ENCODE measurements at regions of chrX and their contacts with region 1.

Region 1: DNA sequence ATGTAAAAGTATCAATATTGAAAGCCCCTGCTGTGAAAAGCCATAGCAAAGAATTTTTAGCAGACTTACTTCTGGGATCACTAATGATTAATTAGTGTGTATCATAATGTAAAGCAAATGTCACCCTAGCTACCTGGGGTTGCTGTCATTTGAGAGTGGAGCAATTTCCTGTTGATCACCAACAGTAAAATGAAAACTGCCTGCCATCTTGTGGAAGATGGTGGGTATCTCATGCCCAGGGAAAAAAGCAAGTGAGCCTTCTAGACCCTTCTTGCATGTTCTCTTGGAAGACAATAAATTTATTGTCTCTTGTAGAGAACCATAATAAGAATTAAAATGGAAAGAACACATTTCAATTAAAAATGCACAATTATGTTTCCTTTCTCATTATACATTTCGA is 360.2 kb downstream of the ZIC3 start:
- DNase-seq: peak; percentile 2
- ATAC-seq: no peak
- H3K4me3 ChIP-seq: no peak overlapping the region
- H3K27ac ChIP-seq: no peak overlapping the region
- H3K4me1 ChIP-seq: no peaks in the 10 kb centered on the region
- H3K27me3 ChIP-seq: no peaks in the 10 kb centered on the region
- CTCF ChIP-seq: peak; percentile 51; the same call in 1 of the 2 replicates

Region 2: GRCh38 chrX:137432608-137433007 is 493.5 kb before region 1 on chrX:
- CTCF ChIA-PET with region 1: no interaction called
- POLR2A ChIA-PET with region 1: no interaction called
- in situ Hi-C with region 1: no loop called
- intact Hi-C with region 1: loop called (anchors 5 kb)
- DNase-seq: peak; percentile 7
- ATAC-seq: peak; percentile 60; the same call in 1 of the 2 replicates
- H3K4me3 ChIP-seq: no peak overlapping the region
- H3K27ac ChIP-seq: no peak overlapping the region
- H3K4me1 ChIP-seq: no peaks in the 10 kb centered on the region
- H3K27me3 ChIP-seq: no peaks in the 10 kb centered on the region
- CTCF ChIP-seq: peak; percentile 69

Region 3: DNA sequence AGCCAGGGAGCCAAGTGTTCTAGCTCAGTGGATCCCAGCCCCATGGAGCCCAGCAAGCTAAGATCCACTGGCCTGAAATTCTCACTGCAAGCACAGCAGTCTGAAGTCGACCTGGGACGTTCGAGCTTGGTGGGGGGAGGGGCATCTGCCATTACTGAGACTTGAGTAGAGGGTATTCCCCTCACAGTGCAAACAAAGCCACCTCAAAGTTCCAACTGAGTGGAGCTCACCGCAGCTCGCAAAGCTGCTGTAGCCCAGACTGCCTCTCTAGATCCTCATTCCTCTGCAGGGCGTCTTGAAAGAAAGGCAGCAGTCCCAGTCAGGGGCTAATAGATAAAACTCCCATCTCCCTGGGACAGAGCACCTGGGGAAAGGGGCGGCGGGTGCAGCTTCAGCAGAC is 133.9 kb before region 1 on chrX:
- CTCF ChIA-PET with region 1: no interaction called
- POLR2A ChIA-PET with region 1: no interaction called
- in situ Hi-C with region 1: no loop called
- intact Hi-C with region 1: no loop called
- DNase-seq: no peak
- ATAC-seq: no peak
- H3K4me3 ChIP-seq: no peak overlapping the region
- H3K27ac ChIP-seq: no peak overlapping the region
- H3K4me1 ChIP-seq: no peaks in the 10 kb centered on the region
- H3K27me3 ChIP-seq: no peaks in the 10 kb centered on the region
- CTCF ChIP-seq: no peak

Region 4: GRCh38 chrX:138001226-138001625 is 75.1 kb after region 1 on chrX:
- CTCF ChIA-PET with region 1: no interaction called
- POLR2A ChIA-PET with region 1: no interaction called
- in situ Hi-C with region 1: no loop called
- intact Hi-C with region 1: no loop called
- DNase-seq: no peak
- ATAC-seq: no peak
- H3K4me3 ChIP-seq: no peak overlapping the region
- H3K27ac ChIP-seq: no peak overlapping the region
- H3K4me1 ChIP-seq: no peaks in the 10 kb centered on the region
- H3K27me3 ChIP-seq: no peaks in the 10 kb centered on the region
- CTCF ChIP-seq: no peak